Heart right ventricle (tissue), 16 donors: ENCODE measurements at regions of chr11 and their contacts with region 1.

Region 1: GRCh38 chr11:2151500-2152257 is 9.3 kb downstream of the INS start:
- DNase-seq: peak; percentile 71 to 72
- ATAC-seq: peak; percentile 29 to 71 (median 52)
- H3K4me3 ChIP-seq: peak overlapping the region in 1 of 10 donors; percentile 5
- H3K27ac ChIP-seq: no peak overlapping the region
- H3K4me1 ChIP-seq: peaks cover 3 to 18% (median 7%) of the 10 kb centered on the region in 9 donors
- H3K27me3 ChIP-seq: peaks cover 5 to 53% (median 46%) of the 10 kb centered on the region in 7 donors
- CTCF ChIP-seq: peak; percentile 69 to 88 (median 77)

Region 2: GRCh38 chr11:1640076-1640946 is 511.4 kb before region 1 on chr11:
- intact Hi-C with region 1: loop called in 1 of 10 experiments (anchors 10 kb)
- DNase-seq: no peak
- ATAC-seq: peak; percentile 39 to 56 (median 46)
- H3K4me3 ChIP-seq: no peak overlapping the region
- H3K27ac ChIP-seq: peak overlapping the region in 3 of 10 donors; percentile 62 to 69 (median 68)
- H3K4me1 ChIP-seq: peaks cover 0 to 28% (median 15%) of the 10 kb centered on the region in 9 donors
- H3K27me3 ChIP-seq: peaks cover 0 to 28% (median 16%) of the 10 kb centered on the region in 7 donors
- CTCF ChIP-seq: peak; percentile 60 to 90 (median 78)

Region 3: GRCh38 chr11:1694064-1694845 is 457.4 kb before region 1 on chr11:
- intact Hi-C with region 1: loop called (anchors 1 to 5 kb)
- DNase-seq: peak; percentile 89 to 94
- ATAC-seq: peak; percentile 95 to 99 (median 97)
- H3K4me3 ChIP-seq: peak overlapping the region in 9 of 10 donors; percentile 26 to 64 (median 48)
- H3K27ac ChIP-seq: peak overlapping the region; percentile 3 to 80 (median 71)
- H3K4me1 ChIP-seq: peaks cover 5 to 15% (median 9%) of the 10 kb centered on the region in 9 donors
- H3K27me3 ChIP-seq: peaks cover 0 to 22% (median 0%) of the 10 kb centered on the region in 7 donors
- CTCF ChIP-seq: peak; percentile 93 to 99 (median 95)

Region 4: DNA sequence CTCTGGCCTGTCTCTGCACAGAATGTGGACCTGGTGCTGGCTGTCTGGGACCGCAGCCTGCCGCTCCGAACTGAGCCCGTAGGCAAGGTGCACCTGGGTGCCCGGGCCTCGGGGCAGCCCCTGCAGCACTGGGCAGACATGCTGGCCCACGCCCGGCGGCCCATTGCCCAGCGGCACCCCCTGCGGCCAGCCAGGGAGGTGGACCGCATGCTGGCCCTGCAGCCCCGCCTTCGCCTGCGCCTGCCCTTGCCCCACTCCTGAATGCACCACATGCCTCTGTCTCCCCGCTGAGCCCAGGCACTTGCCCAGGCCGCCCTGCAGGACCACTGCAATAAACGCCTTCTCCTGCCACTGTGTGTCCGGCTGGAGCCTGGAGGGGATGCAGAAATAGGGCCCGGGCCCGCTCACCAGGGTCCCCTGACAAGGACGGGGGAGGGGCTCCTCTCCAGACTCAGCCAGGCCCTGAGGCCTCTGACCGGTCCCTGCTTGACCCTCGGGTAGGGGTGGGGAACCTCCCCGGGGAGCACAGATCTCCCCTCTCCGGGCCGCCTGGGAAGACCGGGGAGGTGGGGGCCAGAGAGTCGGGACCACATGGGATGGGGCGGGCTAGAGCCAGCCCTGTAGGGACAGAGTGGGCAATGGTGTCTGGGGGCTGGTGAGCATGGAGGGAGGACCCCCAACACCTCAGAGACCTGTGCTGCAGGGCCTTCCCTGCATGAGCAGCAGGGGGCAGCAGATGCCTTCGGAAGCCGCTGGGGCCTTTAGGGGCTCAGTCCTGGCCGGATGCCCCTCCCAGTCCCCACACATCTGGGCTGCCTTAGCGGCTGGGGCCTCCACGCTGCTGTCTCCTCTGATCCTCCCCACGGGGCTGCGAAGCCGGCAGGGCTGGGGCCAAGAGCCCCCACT is 314.3 kb before region 1 on chr11:
- intact Hi-C with region 1: loop called (anchors 1 to 5 kb)
- DNase-seq: peak; percentile 71 to 78
- ATAC-seq: peak; percentile 29 to 71 (median 58)
- H3K4me3 ChIP-seq: no peak overlapping the region
- H3K27ac ChIP-seq: peak overlapping the region in 2 of 10 donors; percentile 34 to 60
- H3K4me1 ChIP-seq: peaks cover 6 to 41% (median 25%) of the 10 kb centered on the region in 9 donors
- H3K27me3 ChIP-seq: no peaks in the 10 kb centered on the region
- CTCF ChIP-seq: peak; percentile 89 to 97 (median 92)

Region 5: GRCh38 chr11:1917671-1918516 is 233.8 kb before region 1 on chr11:
- intact Hi-C with region 1: loop called in 1 of 10 experiments (anchors 5 kb)
- DNase-seq: peak in 1 of 2 donors; percentile 69
- ATAC-seq: peak; percentile 5 to 69 (median 56)
- H3K4me3 ChIP-seq: peak overlapping the region in 8 of 10 donors; percentile 3 to 32 (median 22)
- H3K27ac ChIP-seq: peak overlapping the region; percentile 40 to 94 (median 81)
- H3K4me1 ChIP-seq: peaks cover 25 to 71% (median 56%) of the 10 kb centered on the region in 9 donors
- H3K27me3 ChIP-seq: no peaks in the 10 kb centered on the region
- CTCF ChIP-seq: peak; percentile 46 to 73 (median 67)